Aorta (tissue), 5 donors: ENCODE measurements at regions of chr13 and their contacts with region 1.

Region 1: DNA sequence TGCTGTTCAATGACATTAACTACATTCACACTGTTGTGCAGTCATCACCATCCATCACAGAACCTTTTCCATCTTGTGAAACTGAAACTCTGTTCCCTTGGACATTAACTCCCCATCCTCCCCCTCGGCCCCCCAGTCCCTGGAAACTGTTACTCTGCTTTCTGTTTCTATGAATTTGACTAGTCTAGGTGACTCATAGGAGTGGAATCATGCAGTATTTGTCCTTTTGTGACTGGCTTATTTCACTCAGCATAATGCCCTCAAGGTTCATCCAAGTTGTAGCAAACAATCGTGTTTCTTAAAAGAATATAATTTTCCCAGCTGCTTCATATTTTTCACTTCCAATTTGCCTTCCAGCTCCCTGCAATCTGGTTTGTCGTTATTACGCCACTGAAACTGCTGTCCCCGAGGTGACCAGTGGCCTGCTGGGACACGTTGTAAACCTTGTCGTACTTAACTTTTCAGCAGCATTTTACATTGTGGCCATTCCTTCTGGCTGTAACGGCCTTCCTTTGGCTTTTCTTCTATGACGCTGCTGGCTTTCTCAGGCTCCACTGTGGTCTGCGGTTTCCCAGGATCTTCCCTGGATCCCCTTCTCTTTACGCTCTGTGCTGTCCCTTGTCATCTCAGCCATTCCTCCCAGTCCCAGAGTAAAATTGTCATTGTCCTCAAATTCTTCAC is 74.0 kb downstream of the DHRS12 start:
- DNase-seq: peak; percentile 76 to 86
- ATAC-seq: peak; percentile 86
- H3K4me3 ChIP-seq: no peak overlapping the region
- H3K27ac ChIP-seq: peak overlapping the region; percentile 89 to 100
- H3K4me1 ChIP-seq: peaks cover 16 to 29% of the 10 kb centered on the region in 2 donors
- H3K27me3 ChIP-seq: no peaks in the 10 kb centered on the region

Region 2: GRCh38 chr13:51435002-51435578 is 294.9 kb before region 1 on chr13:
- intact Hi-C with region 1: loop called in 1 of 2 experiments (anchors 5 kb)
- DNase-seq: no peak
- ATAC-seq: no peak
- H3K4me3 ChIP-seq: no peak overlapping the region
- H3K27ac ChIP-seq: no peak overlapping the region
- H3K4me1 ChIP-seq: no peaks in the 10 kb centered on the region
- H3K27me3 ChIP-seq: no peaks in the 10 kb centered on the region

Region 3: DNA sequence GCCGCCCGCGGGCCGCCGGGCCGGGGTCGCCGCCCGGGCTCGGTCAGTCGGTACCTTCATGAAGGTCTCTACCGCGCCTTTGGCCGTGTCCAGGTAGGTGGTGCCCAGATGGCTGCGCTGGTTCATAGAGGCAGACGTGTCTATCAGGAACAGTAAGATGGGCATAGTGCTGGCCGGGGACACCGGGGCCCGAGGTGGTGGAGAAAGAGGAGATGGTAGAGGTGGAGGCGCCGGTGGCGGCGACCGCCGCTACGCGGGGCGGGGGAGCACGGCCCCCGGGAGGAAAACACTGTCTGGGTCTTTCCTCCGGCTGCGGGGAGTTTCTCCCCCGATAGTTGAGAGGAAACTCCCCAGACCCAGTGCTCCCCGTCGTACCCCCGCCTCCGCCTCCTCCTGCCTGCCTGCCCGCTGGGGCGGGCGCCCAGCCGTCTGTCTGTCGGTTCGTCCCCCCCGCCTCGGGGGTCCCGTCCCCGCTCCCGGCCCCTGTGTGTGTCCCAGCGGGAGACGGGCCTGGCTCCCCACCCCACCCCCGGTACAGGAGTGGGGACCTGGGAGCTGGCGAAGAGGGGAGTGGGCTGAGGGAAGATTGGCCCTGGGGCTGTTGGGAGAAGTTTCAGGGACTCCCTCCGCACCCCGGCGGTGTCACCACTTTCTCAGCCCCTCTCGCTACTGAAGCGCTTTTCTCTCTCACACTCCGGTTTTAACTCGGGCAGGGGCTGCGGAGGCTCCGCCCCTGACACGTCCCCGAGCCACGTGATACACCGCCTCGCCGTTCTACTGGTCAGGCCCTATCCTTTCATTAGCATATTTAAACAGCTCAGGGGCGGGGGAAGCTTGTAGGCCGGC is 277.4 kb before region 1 on chr13 and contains the start of gene INTS6:
- intact Hi-C with region 1: loop called (anchors 2 to 5 kb)
- DNase-seq: peak; percentile 99
- ATAC-seq: peak; percentile 97
- H3K4me3 ChIP-seq: peak within 1 kb of the TSS; percentile 79 to 100
- H3K27ac ChIP-seq: peak within 1 kb of the TSS; percentile 88 to 100
- H3K4me1 ChIP-seq: peaks cover 0 to 3% of the 10 kb centered on the region in 2 donors
- H3K27me3 ChIP-seq: peaks cover 0 to 2% of the 10 kb centered on the region in 2 donors
- total RNA-seq, gene INTS6: 38.1 to 51.6 TPM

Region 4: GRCh38 chr13:51583875-51584730 is 145.9 kb before region 1 on chr13 and contains the start of gene WDFY2:
- intact Hi-C with region 1: loop called in 1 of 2 experiments (anchors 2 kb)
- DNase-seq: peak; percentile 100
- ATAC-seq: peak; percentile 98
- H3K4me3 ChIP-seq: peak within 1 kb of the TSS; percentile 38 to 95
- H3K27ac ChIP-seq: peak within 1 kb of the TSS; percentile 49 to 76
- H3K4me1 ChIP-seq: peaks cover 0 to 5% of the 10 kb centered on the region in 2 donors
- H3K27me3 ChIP-seq: no peaks in the 10 kb centered on the region
- total RNA-seq, gene WDFY2: 15.3 to 24.4 TPM

Region 5: DNA sequence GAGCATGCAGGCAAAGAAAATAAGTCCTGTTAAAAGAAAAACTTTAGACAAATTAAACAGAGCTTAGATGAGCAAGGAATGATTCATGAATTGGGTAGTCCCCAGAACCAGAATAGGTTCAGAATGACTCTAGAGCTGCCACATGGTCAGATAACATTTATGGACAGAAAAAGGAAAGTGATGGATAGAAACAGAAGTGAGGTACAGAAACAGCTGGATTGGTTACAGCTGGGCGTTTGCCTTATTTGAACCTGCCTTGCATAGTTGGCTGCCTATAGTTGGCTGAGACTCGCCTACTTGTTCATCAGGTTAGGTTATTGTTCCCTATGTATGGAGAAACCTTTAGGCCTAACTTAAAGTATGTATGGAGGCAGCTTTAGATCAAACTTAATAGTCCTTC is 110.4 kb before region 1 on chr13:
- intact Hi-C with region 1: no loop called
- DNase-seq: no peak
- ATAC-seq: peak; percentile 56
- H3K4me3 ChIP-seq: no peak overlapping the region
- H3K27ac ChIP-seq: peak overlapping the region in 1 of 2 donors; percentile 86
- H3K4me1 ChIP-seq: peaks cover 5 to 7% of the 10 kb centered on the region in 2 donors
- H3K27me3 ChIP-seq: no peaks in the 10 kb centered on the region

Region 6: DNA sequence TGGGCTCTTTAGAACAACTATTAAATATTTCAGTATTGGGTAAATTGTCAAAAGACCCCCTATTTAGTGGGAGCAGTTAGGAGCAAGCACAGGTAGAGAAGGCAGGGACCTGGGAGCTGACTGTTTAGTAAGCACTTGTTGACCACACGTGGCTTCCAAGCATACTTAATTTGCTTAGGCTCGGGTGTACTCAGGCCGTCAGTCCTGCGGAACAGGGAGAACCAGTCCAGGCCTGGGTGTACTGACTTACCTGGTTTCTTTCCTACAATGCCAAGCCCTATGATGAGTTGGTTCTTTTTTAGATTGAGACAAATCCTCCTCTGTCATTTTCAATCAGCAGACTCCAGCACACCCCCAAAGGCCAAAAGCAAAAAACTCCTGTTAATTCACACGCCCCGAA is 55.7 kb before region 1 on chr13:
- intact Hi-C with region 1: loop called (anchors 10 kb)
- DNase-seq: no peak
- ATAC-seq: no peak
- H3K4me3 ChIP-seq: no peak overlapping the region
- H3K27ac ChIP-seq: no peak overlapping the region
- H3K4me1 ChIP-seq: peaks cover 3 to 4% of the 10 kb centered on the region in 2 donors
- H3K27me3 ChIP-seq: no peaks in the 10 kb centered on the region

Region 7: DNA sequence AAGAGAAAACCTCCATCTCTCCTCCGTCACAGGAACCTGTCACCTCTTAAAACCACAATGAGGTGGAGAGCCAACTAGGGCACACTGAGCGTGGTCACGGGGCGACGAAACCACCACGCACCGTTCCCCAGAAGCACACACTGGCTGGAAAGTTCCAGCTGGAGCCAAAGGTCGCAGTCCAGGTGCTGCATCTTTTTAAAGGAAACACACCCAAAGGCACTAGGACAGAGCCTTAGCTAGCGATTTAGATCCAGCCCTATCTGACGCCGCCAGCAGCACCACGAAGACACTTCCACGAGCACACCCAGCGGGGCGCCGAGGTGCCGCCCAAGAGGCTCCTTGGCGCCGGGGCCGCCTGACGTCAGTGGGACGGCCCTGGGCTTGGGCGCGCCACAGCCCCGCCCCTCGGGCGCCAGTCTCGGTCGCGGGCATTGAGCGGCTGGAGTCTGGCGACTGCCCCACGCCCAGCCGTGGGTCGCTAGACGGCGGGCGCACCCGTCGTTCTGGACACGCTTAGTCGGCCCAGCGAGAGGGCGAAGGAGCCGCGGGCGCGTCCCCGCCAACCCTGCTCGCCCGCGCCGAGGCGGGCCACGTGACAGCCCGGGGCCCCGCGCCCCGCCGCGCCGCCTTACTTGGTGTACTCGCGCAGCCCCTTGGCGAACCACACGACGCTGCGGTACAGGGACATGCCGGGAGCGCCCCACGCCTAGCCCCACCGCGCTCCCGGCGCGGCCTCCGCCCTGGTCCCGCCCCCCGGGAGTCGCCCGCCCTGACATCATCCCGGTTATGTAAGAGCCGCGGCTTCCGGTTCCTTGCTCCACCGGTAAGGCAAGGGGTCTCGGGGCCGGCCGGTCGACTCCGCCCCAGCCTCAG is 73.7 kb after region 1 on chr13 and contains the start of gene DHRS12:
- intact Hi-C with region 1: loop called in 1 of 2 experiments (anchors 5 kb)
- DNase-seq: peak; percentile 95 to 97
- ATAC-seq: peak; percentile 93
- H3K4me3 ChIP-seq: peak within 1 kb of the TSS; percentile 61 to 62
- H3K27ac ChIP-seq: peak within 1 kb of the TSS; percentile 94 to 96
- H3K4me1 ChIP-seq: peaks cover 2 to 6% of the 10 kb centered on the region in 2 donors
- H3K27me3 ChIP-seq: no peaks in the 10 kb centered on the region
- total RNA-seq, gene DHRS12: 11.8 to 13.5 TPM